H1 (cell line): ENCODE measurements at regions of chr1 and their contacts with region 1.

Region 1: GRCh38 chr1:175757381-175758015 is 14.1 kb upstream of the TNR start:
- DNase-seq: peak; percentile 59 to 81
- H3K4me3 ChIP-seq: no peak overlapping the region
- H3K27ac ChIP-seq: no peak overlapping the region
- H3K4me1 ChIP-seq: no peaks in the 10 kb centered on the region; a peak in 1 of 7 replicates
- H3K27me3 ChIP-seq: no peaks in the 10 kb centered on the region
- CTCF ChIP-seq: peak; percentile 88 to 94 (median 89)
- EP300 ChIP-seq: no peak
- POLR2A ChIP-seq: no peak
- RAD21 ChIP-seq: peak; percentile 80 to 89

Region 2: GRCh38 chr1:175649416-175649815 is 108.1 kb before region 1 on chr1:
- CTCF ChIA-PET with region 1: interaction called, 10 read pairs
- POLR2A ChIA-PET with region 1: no interaction called
- DNase-seq: no peak
- H3K4me3 ChIP-seq: no peak overlapping the region
- H3K27ac ChIP-seq: no peak overlapping the region
- H3K4me1 ChIP-seq: no peaks in the 10 kb centered on the region
- H3K27me3 ChIP-seq: no peaks in the 10 kb centered on the region
- CTCF ChIP-seq: peak; percentile 35 to 46 (median 45)
- EP300 ChIP-seq: no peak
- POLR2A ChIP-seq: no peak
- RAD21 ChIP-seq: peak; percentile 59 to 65

Region 3: DNA sequence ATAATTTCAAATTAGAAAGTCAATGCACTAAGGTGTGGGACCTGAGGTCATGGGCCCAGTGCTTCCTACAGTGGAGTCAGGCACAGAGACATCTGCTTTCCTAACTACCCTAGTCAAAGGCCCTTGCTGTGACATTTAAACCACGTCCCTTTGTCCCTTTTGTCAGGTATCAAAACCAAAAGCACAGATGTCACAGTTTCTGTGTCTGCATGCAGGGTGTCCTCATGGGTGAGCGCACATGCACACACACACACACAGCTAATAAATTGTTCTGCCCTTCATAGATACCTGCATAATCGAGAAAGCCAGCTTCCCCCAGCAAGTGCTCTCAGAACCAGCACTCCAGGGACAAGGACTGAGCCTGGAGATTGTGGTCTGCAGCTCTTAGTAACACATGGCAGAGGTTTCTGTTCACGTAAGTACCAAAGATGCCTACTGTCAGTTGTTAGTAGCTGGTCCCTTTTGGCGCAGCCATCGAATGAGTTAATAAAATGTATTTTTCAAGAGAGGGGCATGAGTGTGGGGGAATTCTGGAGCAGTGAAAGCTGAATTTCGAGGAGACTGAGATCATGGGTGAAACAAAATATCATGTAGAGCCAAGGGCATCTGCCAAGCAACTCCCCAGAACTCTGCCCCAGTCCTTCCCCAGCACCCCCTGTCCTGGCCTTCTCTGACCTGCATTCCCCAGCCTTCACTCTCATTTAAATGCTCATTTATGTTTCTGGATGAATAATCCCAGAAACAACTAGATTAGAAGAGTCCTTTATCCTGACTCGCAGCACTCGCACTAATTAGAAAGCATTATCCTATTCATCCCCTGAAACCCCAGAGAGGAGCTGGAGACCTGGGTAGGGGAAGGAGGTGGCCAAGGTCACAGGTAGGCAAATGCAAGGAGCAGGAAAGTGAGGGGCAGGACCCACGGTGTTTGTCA is 39.6 kb before region 1 on chr1:
- CTCF ChIA-PET with region 1: interaction called, 12 read pairs
- POLR2A ChIA-PET with region 1: no interaction called
- DNase-seq: no peak
- H3K4me3 ChIP-seq: no peak overlapping the region
- H3K27ac ChIP-seq: no peak overlapping the region
- H3K4me1 ChIP-seq: peaks cover 0 to 2% (median 0%) of the 10 kb centered on the region in 4 experiments; a peak in 2 of 7 replicates
- H3K27me3 ChIP-seq: no peaks in the 10 kb centered on the region; a peak in 2 of 7 replicates
- CTCF ChIP-seq: no peak
- EP300 ChIP-seq: no peak
- POLR2A ChIP-seq: no peak
- RAD21 ChIP-seq: no peak

Region 4: GRCh38 chr1:175768610-175769009 is 11.1 kb after region 1 on chr1:
- CTCF ChIA-PET with region 1: interaction called, 46 read pairs
- POLR2A ChIA-PET with region 1: no interaction called
- DNase-seq: no peak
- H3K4me3 ChIP-seq: no peak overlapping the region
- H3K27ac ChIP-seq: no peak overlapping the region
- H3K4me1 ChIP-seq: no peaks in the 10 kb centered on the region
- H3K27me3 ChIP-seq: no peaks in the 10 kb centered on the region; a peak in 1 of 7 replicates
- CTCF ChIP-seq: no peak
- EP300 ChIP-seq: no peak
- POLR2A ChIP-seq: no peak
- RAD21 ChIP-seq: no peak

Region 5: GRCh38 chr1:175792136-175792535 is 34.6 kb after region 1 on chr1:
- CTCF ChIA-PET with region 1: interaction called, 16 read pairs
- POLR2A ChIA-PET with region 1: no interaction called
- DNase-seq: no peak
- H3K4me3 ChIP-seq: no peak overlapping the region
- H3K27ac ChIP-seq: no peak overlapping the region
- H3K4me1 ChIP-seq: peaks cover 0 to 6% (median 1%) of the 10 kb centered on the region in 4 experiments; a peak in 3 of 7 replicates
- H3K27me3 ChIP-seq: no peaks in the 10 kb centered on the region
- CTCF ChIP-seq: no peak
- EP300 ChIP-seq: no peak
- POLR2A ChIP-seq: no peak
- RAD21 ChIP-seq: no peak

Region 6: GRCh38 chr1:175851749-175852148 is 94.3 kb after region 1 on chr1:
- CTCF ChIA-PET with region 1: no interaction called
- POLR2A ChIA-PET with region 1: no interaction called
- DNase-seq: no peak
- H3K4me3 ChIP-seq: no peak overlapping the region
- H3K27ac ChIP-seq: no peak overlapping the region
- H3K4me1 ChIP-seq: peaks cover 0 to 4% (median 0%) of the 10 kb centered on the region in 4 experiments; a peak in 2 of 7 replicates
- H3K27me3 ChIP-seq: no peaks in the 10 kb centered on the region
- CTCF ChIP-seq: no peak
- EP300 ChIP-seq: no peak
- POLR2A ChIP-seq: no peak
- RAD21 ChIP-seq: no peak